IMR-90 (cell line): ENCODE measurements at regions of chr17 and their contacts with region 1.

Region 1: GRCh38 chr17:17919169-17920107 is 52.8 kb downstream of the TOM1L2 start:
- DNase-seq: peak; percentile 72
- ATAC-seq: peak; percentile 65
- H3K4me3 ChIP-seq: no peak overlapping the region
- H3K27ac ChIP-seq: peak overlapping the region; percentile 25; the same call in 1 of the 2 replicates
- H3K4me1 ChIP-seq: peaks cover 27% of the 10 kb centered on the region
- H3K27me3 ChIP-seq: no peaks in the 10 kb centered on the region
- CTCF ChIP-seq: peak; percentile 85
- POLR2A ChIP-seq: no peak
- RAD21 ChIP-seq: peak; percentile 92

Region 2: GRCh38 chr17:17812211-17813057 is 107.0 kb before region 1 on chr17:
- CTCF ChIA-PET with region 1: interaction called, 3 read pairs
- POLR2A ChIA-PET with region 1: no interaction called
- dilution Hi-C with region 1: no loop called
- in situ Hi-C with region 1: no loop called
- intact Hi-C with region 1: loop called (anchors 1 kb)
- DNase-seq: peak; percentile 41
- ATAC-seq: peak; percentile 67
- H3K4me3 ChIP-seq: no peak overlapping the region
- H3K27ac ChIP-seq: no peak overlapping the region
- H3K4me1 ChIP-seq: peaks cover 9% of the 10 kb centered on the region; the same call in 1 of the 2 replicates
- H3K27me3 ChIP-seq: no peaks in the 10 kb centered on the region
- CTCF ChIP-seq: peak; percentile 89
- POLR2A ChIP-seq: no peak
- RAD21 ChIP-seq: peak; percentile 77

Region 3: GRCh38 chr17:17890773-17891759 is 28.4 kb before region 1 on chr17:
- CTCF ChIA-PET with region 1: interaction called, 15 read pairs
- POLR2A ChIA-PET with region 1: no interaction called
- dilution Hi-C with region 1: no loop called
- in situ Hi-C with region 1: no loop called
- intact Hi-C with region 1: no loop called
- DNase-seq: peak; percentile 72
- ATAC-seq: peak; percentile 95
- H3K4me3 ChIP-seq: no peak overlapping the region
- H3K27ac ChIP-seq: no peak overlapping the region
- H3K4me1 ChIP-seq: peaks cover 4% of the 10 kb centered on the region; the same call in 1 of the 2 replicates
- H3K27me3 ChIP-seq: no peaks in the 10 kb centered on the region
- CTCF ChIP-seq: peak; percentile 83
- POLR2A ChIP-seq: no peak
- RAD21 ChIP-seq: peak; percentile 94

Region 4: DNA sequence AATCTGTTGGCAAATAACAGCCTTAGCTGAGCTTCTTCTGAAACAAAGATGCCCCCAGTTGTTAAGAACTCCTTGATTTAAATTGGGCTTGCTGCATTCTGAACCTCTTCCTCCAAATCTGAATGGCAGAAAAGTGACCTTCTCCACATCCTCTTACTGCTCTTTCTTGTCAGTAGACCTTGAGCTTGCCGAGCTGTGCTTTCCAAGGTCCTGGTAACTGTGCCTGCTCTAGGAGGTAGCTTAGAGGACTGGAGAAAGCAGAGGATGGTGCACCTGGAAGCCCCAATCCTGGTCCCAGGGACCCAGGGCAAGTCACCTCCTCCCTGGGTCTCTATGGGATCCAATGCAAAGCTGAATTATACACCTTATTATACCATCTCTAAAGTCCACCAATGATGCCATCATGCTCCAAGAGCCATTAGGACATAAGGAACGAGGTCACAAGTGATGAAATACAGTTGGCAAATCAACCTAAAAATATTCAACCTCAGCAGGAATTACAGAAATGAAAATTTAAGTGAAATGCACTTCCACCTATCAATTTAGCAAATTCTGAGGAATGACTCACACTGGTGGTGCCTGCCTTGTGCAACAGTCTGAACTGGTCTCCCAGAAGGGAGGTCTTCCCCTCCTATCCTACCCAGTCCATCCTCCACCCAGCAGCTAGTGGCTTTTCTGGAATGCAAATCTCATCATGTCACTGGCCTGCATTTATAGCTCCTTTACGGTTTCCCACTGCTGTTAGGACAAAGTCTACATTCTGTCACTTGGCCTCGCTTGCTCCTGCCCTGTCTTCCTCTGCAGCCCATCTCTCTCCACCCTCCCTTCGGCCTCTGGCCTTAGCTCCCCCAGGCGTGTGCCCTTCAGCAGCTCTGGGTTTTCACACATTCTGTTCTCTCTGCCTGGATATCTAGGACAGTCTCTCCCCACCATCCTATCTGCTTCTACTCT is 16.2 kb after region 1 on chr17:
- CTCF ChIA-PET with region 1: interaction called, 3 read pairs
- POLR2A ChIA-PET with region 1: no interaction called
- dilution Hi-C with region 1: no loop called
- in situ Hi-C with region 1: no loop called
- intact Hi-C with region 1: loop called (anchors 2 kb)
- DNase-seq: peak; percentile 92
- ATAC-seq: peak; percentile 90
- H3K4me3 ChIP-seq: no peak overlapping the region
- H3K27ac ChIP-seq: peak overlapping the region; percentile 51
- H3K4me1 ChIP-seq: peaks cover 27% of the 10 kb centered on the region
- H3K27me3 ChIP-seq: no peaks in the 10 kb centered on the region
- CTCF ChIP-seq: no peak
- POLR2A ChIP-seq: no peak
- RAD21 ChIP-seq: no peak; the same call in 1 of the 2 replicates

Region 5: DNA sequence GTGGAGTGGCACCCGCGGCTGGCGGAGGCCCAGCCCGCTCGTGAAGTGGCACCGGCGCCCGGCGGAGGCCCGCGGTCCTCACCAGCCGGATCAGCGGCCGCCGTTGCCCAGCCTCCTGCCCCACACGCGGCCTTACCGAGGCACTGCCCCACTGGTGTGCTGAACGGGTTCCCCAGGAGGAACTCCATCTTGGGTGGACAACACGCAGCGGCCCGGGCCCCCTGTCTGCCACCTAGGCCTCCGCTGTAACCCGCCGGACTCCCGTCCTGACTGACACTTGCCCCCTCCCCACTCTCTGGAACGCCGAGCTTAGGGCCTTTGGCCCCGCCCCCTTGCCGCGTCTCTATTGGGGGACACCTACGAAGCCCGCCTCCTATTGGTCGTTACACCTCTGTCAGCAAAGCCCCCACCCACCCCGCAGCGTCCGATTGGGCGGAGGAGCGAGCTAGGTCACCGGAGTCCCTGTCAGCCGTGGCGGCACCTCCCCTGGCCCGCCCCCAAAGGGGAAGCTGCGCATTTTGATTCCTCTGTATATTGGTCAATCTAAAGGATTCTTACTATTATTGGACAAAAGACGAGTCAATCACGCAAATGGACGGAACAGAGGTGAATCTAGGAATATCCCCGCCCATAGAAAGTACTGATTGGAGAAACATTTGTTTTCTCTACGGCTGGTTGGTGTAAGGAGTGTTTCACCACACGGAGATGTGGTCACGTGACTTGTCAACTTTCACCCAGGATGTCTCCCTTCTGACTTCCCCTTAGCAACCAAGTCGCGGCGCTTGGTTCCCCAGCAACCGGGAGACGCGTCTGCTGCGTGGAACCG is 52.9 kb after region 1 on chr17 and contains the starts of genes DRC3 and TOM1L2:
- CTCF ChIA-PET with region 1: interaction called, 3 read pairs
- POLR2A ChIA-PET with region 1: interaction called, 4 read pairs
- dilution Hi-C with region 1: no loop called
- in situ Hi-C with region 1: no loop called
- intact Hi-C with region 1: loop called (anchors 5 kb)
- DNase-seq: peak; percentile 100
- ATAC-seq: peak; percentile 96
- H3K4me3 ChIP-seq: peak within 1 kb of the TSS; percentile 66
- H3K27ac ChIP-seq: peak within 1 kb of the TSS; percentile 36
- H3K4me1 ChIP-seq: peaks cover 9% of the 10 kb centered on the region
- H3K27me3 ChIP-seq: no peaks in the 10 kb centered on the region
- CTCF ChIP-seq: no peak
- POLR2A ChIP-seq: peak; percentile 82
- RAD21 ChIP-seq: peak; percentile 18; the same call in 1 of the 2 replicates
- total RNA-seq, gene DRC3: 0.28 and 0.72 TPM in 2 replicates
- total RNA-seq, gene TOM1L2: 23.3 and 34.4 TPM in 2 replicates